Activated CD4-positive, alpha-beta T cell treated with anti-CD3 and anti-CD28 coated beads for 36 hours (primary cell): ENCODE measurements at regions of chr5 and their contacts with region 1.

Region 1: DNA sequence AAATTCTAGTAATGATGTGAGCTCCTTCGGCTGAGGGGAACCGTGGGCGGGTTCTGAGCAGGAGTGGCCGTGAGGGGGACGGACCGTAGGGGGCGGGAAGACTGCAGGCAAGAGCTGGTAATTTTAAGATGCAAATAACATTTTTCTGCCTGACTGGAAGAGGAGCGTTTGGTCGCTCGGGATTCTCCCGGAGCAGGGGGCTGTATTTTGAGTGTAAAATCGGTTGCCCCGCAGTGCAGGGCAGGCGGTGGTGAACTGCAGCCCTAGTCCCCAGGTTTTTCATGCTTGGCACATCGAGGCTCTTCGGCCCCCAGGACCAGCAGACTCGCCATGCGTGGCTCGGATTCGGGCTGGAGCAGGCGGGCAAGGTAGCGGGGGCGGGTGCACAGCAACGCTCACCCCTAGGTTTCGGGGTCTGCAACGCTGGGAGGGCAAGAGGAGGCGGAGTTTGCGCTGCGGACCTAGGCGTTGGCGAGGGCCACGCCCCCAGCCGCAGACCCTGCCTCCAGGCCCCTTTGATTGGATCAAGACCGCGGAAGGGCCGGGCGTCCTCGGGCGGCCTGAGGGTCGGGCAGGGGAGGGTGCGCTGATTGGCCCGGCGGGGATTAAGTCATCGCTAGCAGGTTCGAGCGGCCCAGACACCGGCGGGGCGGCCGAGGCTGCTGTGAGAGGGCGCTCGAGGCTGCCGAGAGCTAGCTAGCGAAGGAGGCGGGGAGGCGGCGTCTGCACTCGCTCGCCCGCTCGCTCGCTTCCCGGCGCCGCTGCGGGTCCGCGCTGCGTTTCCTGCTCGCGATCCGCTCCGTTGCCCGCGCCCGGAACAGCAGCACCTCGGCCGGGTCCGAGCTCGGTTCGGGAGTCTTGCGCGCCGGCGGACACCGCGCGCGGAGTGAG is at the start of gene ARHGAP26:
- DNase-seq: peak; percentile 96
- ATAC-seq: peak; percentile 91
- H3K4me3 Mint-ChIP-seq: peak within 1 kb of the TSS; percentile 84
- H3K27ac Mint-ChIP-seq: peak within 1 kb of the TSS; percentile 88
- H3K4me1 Mint-ChIP-seq: peaks cover 40% of the 10 kb centered on the region
- H3K27me3 Mint-ChIP-seq: no peaks in the 10 kb centered on the region
- total RNA-seq, gene ARHGAP26: 12.8 to 15.4 TPM

Region 2: DNA sequence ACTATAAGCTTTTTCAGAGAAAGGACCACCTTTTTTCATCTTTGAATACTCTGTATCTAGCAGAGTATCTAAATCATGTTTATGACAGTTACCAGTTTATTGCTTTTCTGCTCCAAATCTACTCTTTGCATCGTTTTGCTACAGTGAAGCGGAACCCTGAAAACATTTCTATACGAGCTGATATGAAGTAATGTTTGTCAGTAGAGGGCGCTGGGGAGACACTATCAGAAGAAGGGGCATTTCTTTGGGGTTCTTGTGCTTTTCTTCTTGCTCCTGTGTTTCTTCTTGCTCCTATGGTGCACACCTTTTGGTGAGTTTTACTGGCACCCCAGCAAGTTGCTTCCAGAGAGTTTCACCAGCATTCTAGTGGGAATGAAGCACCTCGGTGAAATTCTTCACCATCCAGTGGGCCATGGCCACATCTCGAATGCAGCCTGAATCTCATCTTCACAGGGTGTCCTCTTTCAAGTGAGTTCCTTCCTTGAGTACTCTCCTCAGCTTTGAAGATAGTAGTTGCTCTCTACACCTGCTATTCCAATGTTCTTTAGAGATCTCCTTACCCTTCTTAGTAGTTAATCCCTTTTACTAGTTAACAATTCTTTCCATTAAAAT is 182.5 kb before region 1 on chr5:
- CTCF ChIA-PET with region 1: no interaction called
- POLR2A ChIA-PET with region 1: no interaction called
- intact Hi-C with region 1: no loop called
- DNase-seq: peak; percentile 63
- ATAC-seq: no peak
- H3K4me3 Mint-ChIP-seq: no peak overlapping the region
- H3K27ac Mint-ChIP-seq: no peak overlapping the region
- H3K4me1 Mint-ChIP-seq: peaks cover 6% of the 10 kb centered on the region
- H3K27me3 Mint-ChIP-seq: peaks cover 9% of the 10 kb centered on the region

Region 3: DNA sequence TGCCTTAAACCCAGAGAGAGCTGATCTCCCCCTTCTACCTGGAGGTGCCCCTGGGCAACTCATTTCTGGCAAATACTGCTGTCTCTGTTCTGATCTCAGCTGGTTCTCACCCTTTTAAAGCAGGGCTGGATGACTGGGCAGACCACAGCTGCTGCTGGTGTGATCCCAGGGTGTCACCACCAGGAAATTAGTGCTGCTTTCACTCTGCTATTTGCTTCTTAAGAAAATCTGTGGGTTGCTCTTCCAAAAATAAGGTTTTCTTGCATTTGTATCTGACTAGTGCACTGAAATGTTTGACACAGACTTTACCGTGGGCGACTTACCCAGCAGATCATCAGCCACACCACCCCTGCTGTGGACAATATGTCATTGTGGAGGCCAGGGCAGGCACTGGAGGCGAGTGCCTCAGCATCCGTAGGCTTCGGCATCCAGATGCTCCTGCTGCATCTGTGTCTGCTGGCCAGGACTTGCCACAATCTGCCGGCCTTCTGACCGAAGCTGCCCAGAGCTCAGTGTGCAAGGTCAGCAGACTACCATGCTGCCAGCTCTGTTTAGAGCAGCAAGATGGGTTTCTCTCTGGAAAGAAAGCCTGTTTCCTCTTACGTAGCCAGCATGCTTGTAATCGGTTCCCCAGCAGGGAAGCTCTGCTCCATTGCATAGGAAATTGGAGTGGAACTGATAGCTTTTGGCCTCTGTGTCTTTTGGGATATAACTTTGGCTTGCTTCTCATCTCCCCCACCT is 13.8 kb after region 1 on chr5:
- CTCF ChIA-PET with region 1: interaction called, 72 read pairs
- POLR2A ChIA-PET with region 1: interaction called, 16 read pairs
- intact Hi-C with region 1: loop called (anchors 1 kb)
- DNase-seq: peak; percentile 88
- ATAC-seq: peak; percentile 93
- H3K4me3 Mint-ChIP-seq: peak overlapping the region; percentile 45
- H3K27ac Mint-ChIP-seq: peak overlapping the region; percentile 82
- H3K4me1 Mint-ChIP-seq: peaks cover 69% of the 10 kb centered on the region
- H3K27me3 Mint-ChIP-seq: no peaks in the 10 kb centered on the region

Region 4: GRCh38 chr5:142821733-142822487 is 51.9 kb after region 1 on chr5:
- CTCF ChIA-PET with region 1: interaction called, 17 read pairs
- POLR2A ChIA-PET with region 1: no interaction called
- intact Hi-C with region 1: loop called (anchors 1 kb)
- DNase-seq: peak; percentile 29
- ATAC-seq: peak; percentile 93
- H3K4me3 Mint-ChIP-seq: no peak overlapping the region
- H3K27ac Mint-ChIP-seq: peak overlapping the region; percentile 53
- H3K4me1 Mint-ChIP-seq: peaks cover 74% of the 10 kb centered on the region
- H3K27me3 Mint-ChIP-seq: no peaks in the 10 kb centered on the region

Region 5: DNA sequence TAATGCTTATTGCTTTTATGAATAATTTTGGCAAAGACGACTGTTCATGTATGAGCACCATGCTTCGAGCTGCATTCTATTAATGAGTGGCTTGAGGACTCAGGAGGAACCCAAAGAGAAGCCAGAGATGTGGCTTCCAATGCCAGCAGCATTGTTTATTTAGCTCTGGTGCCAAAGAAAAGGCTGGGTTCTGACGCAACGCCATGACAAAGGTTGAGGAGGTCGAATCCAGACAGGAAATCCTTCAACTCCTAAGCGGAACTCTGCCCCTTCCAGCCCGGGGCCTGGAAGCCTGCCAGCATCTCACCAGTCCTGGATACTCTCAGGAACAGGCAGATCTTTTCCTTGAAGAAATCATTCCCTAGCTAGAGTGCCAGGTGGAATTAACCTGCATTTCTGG is 104.6 kb after region 1 on chr5:
- CTCF ChIA-PET with region 1: interaction called, 14 read pairs
- POLR2A ChIA-PET with region 1: no interaction called
- intact Hi-C with region 1: no loop called
- DNase-seq: no peak
- ATAC-seq: no peak
- H3K4me3 Mint-ChIP-seq: no peak overlapping the region
- H3K27ac Mint-ChIP-seq: no peak overlapping the region
- H3K4me1 Mint-ChIP-seq: no peaks in the 10 kb centered on the region
- H3K27me3 Mint-ChIP-seq: no peaks in the 10 kb centered on the region

Region 6: DNA sequence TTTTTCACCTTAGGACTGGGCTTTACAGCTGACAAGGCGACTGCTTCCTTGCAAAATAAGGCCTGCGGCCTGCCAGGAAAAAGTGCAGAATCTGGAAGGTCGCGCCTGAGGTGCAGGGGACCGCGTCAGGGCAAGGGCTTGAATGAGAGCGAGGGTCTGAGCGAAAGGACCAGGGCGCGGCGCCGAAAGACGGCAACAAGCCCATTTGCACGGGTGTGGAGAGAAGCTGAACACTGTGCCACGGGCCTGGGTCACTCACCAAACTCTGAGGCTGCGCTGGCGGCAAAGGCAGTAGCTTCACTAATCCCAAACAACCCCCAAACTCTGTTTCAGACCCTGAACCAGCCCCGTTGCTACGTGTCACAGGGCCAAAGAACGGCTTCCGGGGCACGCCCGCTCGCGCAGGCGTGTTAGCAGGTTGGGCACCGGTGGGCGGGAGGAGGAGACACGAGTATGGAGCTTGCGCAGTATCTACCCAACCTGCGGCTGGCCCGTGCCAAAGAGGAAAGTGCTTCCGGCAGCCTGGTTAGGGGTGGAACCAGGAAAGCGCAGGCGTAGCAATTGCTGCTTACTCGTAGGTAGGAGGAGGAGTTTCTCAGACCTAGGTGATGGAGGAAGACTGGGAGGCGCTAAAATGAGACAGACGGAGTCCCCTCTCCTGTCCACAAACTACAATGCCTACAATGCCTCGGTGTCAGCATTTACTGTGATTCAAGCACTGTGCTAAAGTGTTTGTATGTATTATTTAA is 1400.5 kb after region 1 on chr5 and contains the starts of genes KCTD16 and YIPF5:
- CTCF ChIA-PET with region 1: no interaction called
- POLR2A ChIA-PET with region 1: no interaction called
- intact Hi-C with region 1: loop called in 1 of 2 experiments (anchors 2 kb)
- DNase-seq: peak; percentile 98
- ATAC-seq: peak; percentile 98
- H3K4me3 Mint-ChIP-seq: peak within 1 kb of the TSS; percentile 99
- H3K27ac Mint-ChIP-seq: peak within 1 kb of the TSS; percentile 96
- H3K4me1 Mint-ChIP-seq: peaks cover 43% of the 10 kb centered on the region
- H3K27me3 Mint-ChIP-seq: no peaks in the 10 kb centered on the region
- total RNA-seq, gene KCTD16: 0.14 to 0.25 TPM
- total RNA-seq, gene YIPF5: 39.1 to 44.2 TPM